ENCODE measurements at regions of chr5 and their contacts with region 1.

Region 1: DNA sequence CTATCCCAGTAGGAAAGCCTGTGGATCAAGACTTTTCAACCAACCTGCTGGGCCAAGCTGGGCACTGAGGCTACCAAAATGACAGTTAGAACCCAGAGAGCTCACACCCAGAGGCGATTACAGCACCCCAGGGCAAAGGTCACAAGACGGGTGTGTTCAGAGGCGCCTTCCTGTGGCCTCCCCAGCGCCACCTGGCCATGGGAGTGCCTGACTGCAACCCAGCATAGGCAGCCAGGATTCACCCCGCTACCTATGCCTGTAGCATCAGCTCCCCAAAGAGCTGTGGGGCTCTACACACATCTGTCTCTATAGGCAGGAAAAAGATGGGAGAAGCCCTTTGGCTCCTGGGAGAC is 33.5 kb downstream of the PDGFRB start:
- DNase-seq: peak; percentile 39 to 63 (median 57)
- H3K4me3 ChIP-seq: no peak overlapping the region
- H3K27ac ChIP-seq: no peak overlapping the region
- H3K4me1 ChIP-seq: peaks cover 0 to 12% (median 8%) of the 10 kb centered on the region in 4 experiments
- H3K27me3 ChIP-seq: no peaks in the 10 kb centered on the region

Region 2: GRCh38 chr5:150022163-150022540 is 100.0 kb before region 1 on chr5:
- CTCF ChIA-PET with region 1: interaction called, 18 read pairs
- POLR2A ChIA-PET with region 1: no interaction called
- DNase-seq: peak in 2 of 3 donors; percentile 34 to 48
- H3K4me3 ChIP-seq: peak overlapping the region in 2 of 7 experiments; percentile 9 to 15
- H3K27ac ChIP-seq: no peak overlapping the region
- H3K4me1 ChIP-seq: peaks cover 0 to 8% (median 6%) of the 10 kb centered on the region in 4 experiments
- H3K27me3 ChIP-seq: no peaks in the 10 kb centered on the region

Region 3: GRCh38 chr5:150044329-150044681 is 77.8 kb before region 1 on chr5:
- CTCF ChIA-PET with region 1: interaction called, 70 read pairs
- POLR2A ChIA-PET with region 1: no interaction called
- DNase-seq: no peak
- H3K4me3 ChIP-seq: peak overlapping the region in 2 of 7 experiments; percentile 2 to 41
- H3K27ac ChIP-seq: no peak overlapping the region
- H3K4me1 ChIP-seq: peaks cover 4 to 32% (median 15%) of the 10 kb centered on the region in 4 experiments
- H3K27me3 ChIP-seq: no peaks in the 10 kb centered on the region

Region 4: GRCh38 chr5:150052956-150053712 is 69.0 kb before region 1 on chr5:
- CTCF ChIA-PET with region 1: interaction called, 28 read pairs
- POLR2A ChIA-PET with region 1: no interaction called
- DNase-seq: peak in 2 of 3 donors; percentile 73 to 78
- H3K4me3 ChIP-seq: no peak overlapping the region
- H3K27ac ChIP-seq: peak overlapping the region in 1 of 2 experiments; percentile 26
- H3K4me1 ChIP-seq: peaks cover 0 to 50% (median 33%) of the 10 kb centered on the region in 4 experiments
- H3K27me3 ChIP-seq: no peaks in the 10 kb centered on the region

Region 5: DNA sequence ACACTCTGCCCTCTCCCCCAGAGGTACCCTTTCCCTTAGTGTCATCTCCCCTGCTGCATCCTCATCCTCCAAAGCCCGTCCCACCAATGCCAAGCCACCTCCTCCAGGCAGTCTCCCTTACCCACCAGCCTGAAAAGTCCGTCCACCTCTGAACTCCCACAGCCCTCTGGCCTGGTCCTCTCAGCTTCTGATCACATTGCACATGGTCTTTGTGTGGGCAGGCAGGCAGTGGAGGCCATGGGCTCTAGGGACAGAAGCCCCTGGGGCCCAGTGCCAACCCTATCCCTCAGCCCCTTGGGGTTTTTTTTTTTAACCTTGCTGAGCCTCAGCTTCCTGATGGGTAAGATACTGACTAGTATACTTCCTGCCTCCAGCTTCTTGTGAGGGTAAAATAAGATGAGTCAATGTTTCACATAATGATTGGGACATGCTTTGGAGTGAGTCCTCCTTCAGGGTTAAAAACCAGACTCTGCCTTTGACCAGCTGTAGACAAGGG is 55.2 kb before region 1 on chr5:
- CTCF ChIA-PET with region 1: interaction called, 18 read pairs
- POLR2A ChIA-PET with region 1: no interaction called
- DNase-seq: peak in 2 of 3 donors; percentile 57 to 58
- H3K4me3 ChIP-seq: peak overlapping the region in 1 of 7 experiments; percentile 10
- H3K27ac ChIP-seq: no peak overlapping the region
- H3K4me1 ChIP-seq: peaks cover 0 to 85% (median 72%) of the 10 kb centered on the region in 4 experiments
- H3K27me3 ChIP-seq: no peaks in the 10 kb centered on the region

Region 6: DNA sequence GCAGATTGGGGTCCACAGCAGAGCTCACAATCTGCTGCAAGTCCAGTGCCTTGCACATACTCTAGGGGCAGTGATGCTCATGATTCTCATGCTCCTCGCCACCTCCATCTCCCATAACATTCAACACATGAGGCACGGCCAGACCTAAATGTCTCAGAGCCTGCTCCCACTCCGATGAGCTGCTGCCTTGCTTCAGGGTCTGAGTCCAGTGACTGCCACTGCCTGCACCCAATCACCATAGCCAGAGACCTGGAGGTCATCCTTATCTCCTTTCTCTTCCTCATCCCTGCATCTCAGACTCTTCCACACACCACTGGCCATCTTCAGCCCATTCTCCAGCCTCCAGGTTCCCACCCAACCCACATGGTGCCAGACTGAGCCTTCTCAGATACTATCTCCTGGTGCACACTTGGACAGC is 46.3 kb before region 1 on chr5:
- CTCF ChIA-PET with region 1: interaction called, 14 read pairs
- POLR2A ChIA-PET with region 1: no interaction called
- DNase-seq: peak in 1 of 3 donors; percentile 39
- H3K4me3 ChIP-seq: no peak overlapping the region
- H3K27ac ChIP-seq: no peak overlapping the region
- H3K4me1 ChIP-seq: peaks cover 4 to 31% (median 21%) of the 10 kb centered on the region in 4 experiments
- H3K27me3 ChIP-seq: no peaks in the 10 kb centered on the region

Region 7: GRCh38 chr5:150107851-150108447 is 14.2 kb before region 1 on chr5:
- CTCF ChIA-PET with region 1: interaction called, 13 read pairs
- POLR2A ChIA-PET with region 1: no interaction called
- DNase-seq: no peak
- H3K4me3 ChIP-seq: no peak overlapping the region
- H3K27ac ChIP-seq: no peak overlapping the region
- H3K4me1 ChIP-seq: peaks cover 0 to 48% (median 15%) of the 10 kb centered on the region in 4 experiments
- H3K27me3 ChIP-seq: no peaks in the 10 kb centered on the region

Region 8: GRCh38 chr5:150258130-150258529 is 136.0 kb after region 1 on chr5:
- CTCF ChIA-PET with region 1: no interaction called
- POLR2A ChIA-PET with region 1: no interaction called
- DNase-seq: peak in 1 of 3 donors; percentile 9
- H3K4me3 ChIP-seq: no peak overlapping the region
- H3K27ac ChIP-seq: no peak overlapping the region
- H3K4me1 ChIP-seq: no peaks in the 10 kb centered on the region
- H3K27me3 ChIP-seq: no peaks in the 10 kb centered on the region

Measured in common myeloid progenitor, CD34-positive (primary cell).